ENCODE measurements at regions of chr9 and their contacts with region 1.

Region 1: DNA sequence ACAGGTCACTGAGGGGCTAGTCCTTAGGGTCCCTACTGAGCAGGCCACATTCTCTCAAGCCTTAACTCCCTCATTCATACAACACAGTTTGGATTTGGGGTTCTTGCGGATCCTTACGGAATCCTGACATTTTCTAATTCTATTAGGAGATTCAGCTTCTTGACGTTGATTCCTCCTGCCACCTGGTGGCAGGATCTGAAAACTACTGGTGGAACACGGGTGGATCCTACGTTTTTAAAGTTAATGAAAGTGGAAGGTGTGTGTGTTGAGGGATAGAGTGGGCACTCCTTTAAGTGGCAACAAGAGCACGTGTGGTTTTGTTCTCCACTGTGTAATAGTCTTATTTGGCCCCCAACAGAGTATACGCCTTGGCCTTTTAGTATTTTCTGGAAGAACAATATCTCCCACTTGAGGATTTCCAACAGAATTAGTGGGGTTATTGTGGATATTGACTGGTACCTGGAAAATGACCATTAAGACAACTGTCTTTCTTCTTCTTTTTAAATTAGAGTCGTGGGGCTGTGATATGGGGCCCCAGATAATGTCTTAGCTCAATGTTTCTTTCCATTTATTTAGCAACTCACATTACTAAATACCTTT is 25.2 kb downstream of the SLC28A3 start:
- DNase-seq: peak; percentile 34
- H3K4me3 Mint-ChIP-seq: no peak overlapping the region
- H3K27ac Mint-ChIP-seq: no peak overlapping the region
- H3K4me1 Mint-ChIP-seq: peaks cover 7% of the 10 kb centered on the region
- H3K27me3 Mint-ChIP-seq: no peaks in the 10 kb centered on the region

Region 2: GRCh38 chr9:83937911-83938323 is 377.5 kb before region 1 on chr9:
- intact Hi-C with region 1: loop called (anchors 1 kb)
- DNase-seq: peak; percentile 23
- H3K4me3 Mint-ChIP-seq: no peak overlapping the region
- H3K27ac Mint-ChIP-seq: no peak overlapping the region
- H3K4me1 Mint-ChIP-seq: peaks cover 13% of the 10 kb centered on the region
- H3K27me3 Mint-ChIP-seq: no peaks in the 10 kb centered on the region

Region 3: DNA sequence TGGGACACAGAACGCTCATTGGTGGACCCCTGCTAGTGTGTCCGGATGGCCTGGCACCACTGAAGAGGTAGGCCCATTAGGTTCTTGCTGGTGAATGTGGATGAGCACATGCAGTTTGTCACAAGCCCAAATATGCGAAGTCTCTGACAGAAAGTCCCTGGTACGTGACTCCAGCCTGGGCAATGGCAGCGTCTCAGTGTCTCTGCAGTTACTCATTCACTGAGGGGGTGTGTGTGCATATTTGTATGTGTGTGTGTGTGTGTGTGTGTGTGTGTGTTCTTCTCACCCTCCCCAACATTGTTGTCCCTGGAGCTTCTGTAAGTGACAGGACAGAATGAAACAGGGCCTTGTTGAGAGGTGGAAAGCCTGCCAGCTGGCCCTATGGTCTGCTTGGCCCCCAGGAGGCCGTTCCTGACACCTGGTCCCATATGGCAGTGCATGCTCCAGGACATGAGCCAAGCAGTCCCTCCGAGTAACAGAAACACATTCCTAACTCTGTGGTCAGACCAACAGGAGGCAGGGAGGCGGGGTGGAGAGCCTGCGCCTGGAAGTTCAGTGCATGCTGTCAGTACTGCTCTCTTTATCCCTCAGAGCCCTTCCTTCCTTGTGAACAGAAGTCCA is 144.7 kb before region 1 on chr9:
- intact Hi-C with region 1: loop called (anchors 10 kb)
- DNase-seq: no peak
- H3K4me3 Mint-ChIP-seq: no peak overlapping the region
- H3K27ac Mint-ChIP-seq: no peak overlapping the region
- H3K4me1 Mint-ChIP-seq: peaks cover 2% of the 10 kb centered on the region
- H3K27me3 Mint-ChIP-seq: peaks cover 8% of the 10 kb centered on the region

Region 4: DNA sequence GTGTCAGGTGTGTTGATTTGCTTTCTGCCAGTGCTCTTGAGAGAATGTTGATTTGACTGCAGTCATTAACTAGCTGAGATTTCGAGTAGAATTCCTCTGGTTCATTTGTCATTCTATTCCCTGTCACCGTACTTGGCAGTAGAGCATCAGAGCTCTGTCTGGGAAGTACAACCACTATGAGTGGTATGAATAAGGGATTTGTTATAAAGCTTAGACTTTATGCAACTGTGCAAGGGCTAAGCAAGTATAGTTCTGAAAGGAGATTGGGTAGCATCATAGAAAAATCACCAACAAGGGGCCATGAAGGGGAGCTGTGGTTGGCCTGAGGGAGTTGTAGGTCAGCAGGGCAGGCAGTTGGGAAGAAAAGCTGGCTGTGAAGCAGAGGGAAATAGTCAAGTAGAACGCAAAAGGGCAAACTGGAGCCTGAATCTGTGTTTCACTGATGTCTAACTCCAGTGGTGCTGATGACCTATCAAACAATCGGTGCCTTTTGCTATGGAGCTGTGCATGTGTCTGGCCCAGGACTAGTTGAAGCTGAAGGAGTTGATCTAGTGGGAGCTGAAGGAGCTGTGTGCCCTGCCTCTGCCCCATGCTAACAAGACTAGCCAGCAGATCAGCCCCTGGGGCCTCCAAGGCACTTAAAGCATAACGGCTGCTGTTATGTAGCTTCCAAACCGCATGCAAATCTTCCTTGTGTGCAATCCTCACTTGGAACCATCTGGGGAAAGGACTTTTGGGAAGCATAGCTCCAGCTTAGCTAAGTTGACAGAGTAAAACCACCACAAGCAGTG is 84.8 kb before region 1 on chr9:
- intact Hi-C with region 1: no loop called
- DNase-seq: no peak
- H3K4me3 Mint-ChIP-seq: no peak overlapping the region
- H3K27ac Mint-ChIP-seq: no peak overlapping the region
- H3K4me1 Mint-ChIP-seq: no peaks in the 10 kb centered on the region
- H3K27me3 Mint-ChIP-seq: peaks cover 12% of the 10 kb centered on the region

Region 5: DNA sequence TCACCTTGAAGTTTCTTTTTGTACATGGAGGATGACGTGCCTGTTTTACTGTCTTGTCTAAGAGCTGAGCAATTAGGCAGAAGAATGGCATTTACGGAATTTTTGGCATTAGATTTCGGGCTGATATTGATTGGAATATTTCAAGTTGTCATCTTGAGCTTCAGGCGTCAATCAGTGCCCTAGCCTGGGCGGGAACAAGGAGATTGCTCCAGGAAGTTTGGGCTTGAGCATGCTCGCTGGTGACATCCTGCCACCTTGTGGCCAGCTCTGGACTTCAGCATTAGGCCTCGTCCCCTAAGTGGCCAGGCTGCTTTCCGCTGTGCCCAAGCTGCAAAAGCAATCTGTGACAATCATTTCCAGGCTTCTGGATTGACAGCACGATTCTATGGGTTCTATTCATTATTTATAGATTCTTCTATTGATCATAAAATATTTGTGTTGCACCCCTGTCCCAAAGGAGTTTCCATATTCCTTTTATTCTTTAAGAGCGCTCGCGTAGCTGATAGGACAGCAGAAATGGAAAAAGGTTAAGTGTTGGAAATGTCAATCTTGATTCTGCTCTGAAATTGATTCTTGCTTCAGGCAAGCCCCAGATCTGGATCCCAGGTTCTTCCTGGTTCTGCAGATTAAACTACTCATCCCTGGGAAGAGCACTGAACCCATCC is 54.2 kb before region 1 on chr9:
- intact Hi-C with region 1: loop called (anchors 1 kb)
- DNase-seq: peak; percentile 25
- H3K4me3 Mint-ChIP-seq: no peak overlapping the region
- H3K27ac Mint-ChIP-seq: no peak overlapping the region
- H3K4me1 Mint-ChIP-seq: peaks cover 7% of the 10 kb centered on the region
- H3K27me3 Mint-ChIP-seq: peaks cover 9% of the 10 kb centered on the region

Region 6: DNA sequence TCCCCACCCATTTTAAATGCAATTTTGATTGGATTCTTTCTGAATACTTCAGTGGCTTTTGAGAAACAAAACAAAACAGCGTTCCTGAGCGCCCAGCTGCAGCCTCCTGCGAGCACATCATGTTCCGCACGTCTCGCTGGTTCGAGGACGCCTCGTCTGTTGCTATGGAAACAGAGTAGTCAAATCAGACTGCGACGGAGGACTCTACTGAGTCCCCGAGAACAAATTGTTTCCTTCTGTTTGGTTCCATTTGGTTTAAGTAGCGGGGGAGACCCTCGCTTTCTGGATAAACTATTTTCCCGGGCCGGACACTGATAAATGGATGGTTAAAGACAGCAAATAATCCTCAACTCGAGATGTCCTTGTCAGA is 43.9 kb before region 1 on chr9:
- intact Hi-C with region 1: loop called (anchors 2 kb)
- DNase-seq: peak; percentile 45
- H3K4me3 Mint-ChIP-seq: peak overlapping the region; percentile 80
- H3K27ac Mint-ChIP-seq: peak overlapping the region; percentile 66
- H3K4me1 Mint-ChIP-seq: peaks cover 23% of the 10 kb centered on the region
- H3K27me3 Mint-ChIP-seq: peaks cover 4% of the 10 kb centered on the region

Region 7: DNA sequence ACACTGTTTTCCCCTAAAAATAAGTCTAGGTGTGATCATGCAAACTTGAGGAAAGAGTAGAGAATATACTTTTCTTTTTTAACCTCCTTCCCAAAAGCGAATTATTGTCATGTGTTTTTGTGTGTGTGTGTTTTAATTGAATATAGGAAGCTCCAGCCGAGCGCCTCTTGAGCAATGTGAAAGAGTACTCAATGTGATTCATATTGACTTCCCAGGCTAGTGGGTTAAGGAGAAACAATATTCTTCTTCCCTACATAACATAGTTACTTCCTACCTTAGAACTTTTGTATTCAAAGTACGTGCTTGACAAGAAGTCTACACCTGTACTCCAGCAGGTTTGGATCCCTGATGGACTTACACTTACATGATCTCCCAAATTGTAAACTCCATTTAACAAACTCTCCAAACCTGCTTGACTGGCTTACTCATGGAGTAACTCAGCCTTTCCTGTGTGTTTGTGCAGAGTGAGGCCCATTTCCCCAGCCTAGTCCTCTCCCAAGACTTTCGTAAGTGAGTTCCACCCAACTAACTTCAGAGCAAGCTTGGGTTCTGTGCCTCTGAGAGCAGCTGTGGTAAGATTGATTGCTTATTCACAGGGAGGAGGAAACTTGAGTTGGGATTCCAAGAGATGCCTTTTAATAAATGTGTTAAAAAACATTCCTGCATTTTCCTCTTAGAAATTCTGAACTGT is 15.9 kb after region 1 on chr9:
- intact Hi-C with region 1: no loop called
- DNase-seq: no peak
- H3K4me3 Mint-ChIP-seq: no peak overlapping the region
- H3K27ac Mint-ChIP-seq: no peak overlapping the region
- H3K4me1 Mint-ChIP-seq: no peaks in the 10 kb centered on the region
- H3K27me3 Mint-ChIP-seq: peaks cover 10% of the 10 kb centered on the region

Region 8: DNA sequence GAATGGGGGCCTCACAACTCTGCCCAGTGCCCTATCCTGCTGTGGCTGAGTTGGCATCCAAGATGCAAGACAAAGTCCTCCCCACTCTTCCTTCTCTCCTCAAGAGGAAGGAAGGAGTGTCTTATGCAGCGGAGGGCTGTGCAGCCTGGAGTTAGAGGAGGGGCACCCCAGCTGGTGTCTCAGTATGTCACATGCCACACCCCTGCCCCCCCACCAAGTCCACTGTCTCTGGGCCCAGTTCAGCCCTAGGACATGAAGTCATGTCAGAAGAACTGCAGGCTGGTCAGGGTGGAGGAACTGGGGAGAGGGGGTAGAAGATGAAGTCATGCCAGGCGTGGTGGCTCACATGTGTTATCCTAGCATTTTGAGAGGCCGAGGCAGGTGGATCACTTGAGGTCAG is 53.2 kb after region 1 on chr9:
- intact Hi-C with region 1: no loop called
- DNase-seq: no peak
- H3K4me3 Mint-ChIP-seq: no peak overlapping the region
- H3K27ac Mint-ChIP-seq: no peak overlapping the region
- H3K4me1 Mint-ChIP-seq: no peaks in the 10 kb centered on the region
- H3K27me3 Mint-ChIP-seq: peaks cover 4% of the 10 kb centered on the region

Region 9: GRCh38 chr9:84670138-84671041 is 355.0 kb after region 1 on chr9:
- intact Hi-C with region 1: no loop called
- DNase-seq: no peak
- H3K4me3 Mint-ChIP-seq: no peak overlapping the region
- H3K27ac Mint-ChIP-seq: no peak overlapping the region
- H3K4me1 Mint-ChIP-seq: peaks cover 6% of the 10 kb centered on the region
- H3K27me3 Mint-ChIP-seq: peaks cover 72% of the 10 kb centered on the region